ENCODE measurements at regions of chr1 and their contacts with region 1.

Region 1: GRCh38 chr1:53681977-53682685 is 56.8 kb downstream of the GLIS1 start:
- DNase-seq: peak; percentile 79
- H3K4me3 ChIP-seq: no peak overlapping the region
- H3K27ac ChIP-seq: peak overlapping the region in 1 of 2 experiments; percentile 88; a peak in 2 of 4 replicates
- H3K4me1 ChIP-seq: peaks cover 15 to 85% of the 10 kb centered on the region in 2 experiments; a peak in 2 of 4 replicates
- H3K27me3 ChIP-seq: no peaks in the 10 kb centered on the region
- CTCF ChIP-seq: peak; percentile 56
- EP300 ChIP-seq: no peak
- RAD21 ChIP-seq: peak; percentile 81

Region 2: GRCh38 chr1:53470155-53470554 is 212.0 kb before region 1 on chr1:
- CTCF ChIA-PET with region 1: interaction called, 10 read pairs
- POLR2A ChIA-PET with region 1: no interaction called
- DNase-seq: no peak
- H3K4me3 ChIP-seq: peak overlapping the region in 1 of 2 experiments; percentile 46; a peak in 1 of 4 replicates
- H3K27ac ChIP-seq: no peak overlapping the region
- H3K4me1 ChIP-seq: peaks cover 0 to 7% of the 10 kb centered on the region in 2 experiments; a peak in 1 of 4 replicates
- H3K27me3 ChIP-seq: no peaks in the 10 kb centered on the region; the same call in 1 of the 2 replicates
- CTCF ChIP-seq: no peak
- EP300 ChIP-seq: no peak
- RAD21 ChIP-seq: no peak

Region 3: GRCh38 chr1:53541761-53542550 is 140.2 kb before region 1 on chr1:
- CTCF ChIA-PET with region 1: no interaction called
- POLR2A ChIA-PET with region 1: no interaction called
- DNase-seq: no peak
- H3K4me3 ChIP-seq: no peak overlapping the region
- H3K27ac ChIP-seq: peak overlapping the region in 1 of 2 experiments; percentile 65; a peak in 2 of 4 replicates
- H3K4me1 ChIP-seq: peaks cover 7 to 42% of the 10 kb centered on the region in 2 experiments; a peak in 1 of 4 replicates
- H3K27me3 ChIP-seq: no peaks in the 10 kb centered on the region
- CTCF ChIP-seq: peak; percentile 47
- EP300 ChIP-seq: no peak
- RAD21 ChIP-seq: no peak

Region 4: DNA sequence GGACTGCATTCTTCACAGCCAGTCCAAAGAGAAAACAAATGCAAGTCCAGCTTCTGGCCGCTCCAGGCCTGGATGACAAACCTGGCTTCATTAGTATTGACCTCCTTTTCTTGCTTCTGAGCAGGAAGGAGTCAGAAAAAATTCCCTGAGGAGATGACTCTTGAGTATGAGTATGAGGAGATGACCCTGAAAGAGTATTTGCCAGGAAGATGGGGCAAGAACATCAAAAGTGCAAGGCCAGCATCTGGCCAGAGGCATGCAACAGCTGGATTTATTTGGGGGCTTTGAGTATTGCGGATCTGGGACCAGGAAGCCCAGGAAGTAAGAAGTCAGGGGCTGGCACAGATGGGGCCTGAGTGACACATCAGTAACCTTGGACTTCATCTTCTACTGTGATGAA is 57.1 kb before region 1 on chr1:
- CTCF ChIA-PET with region 1: interaction called, 13 read pairs
- POLR2A ChIA-PET with region 1: no interaction called
- DNase-seq: no peak
- H3K4me3 ChIP-seq: no peak overlapping the region
- H3K27ac ChIP-seq: no peak overlapping the region
- H3K4me1 ChIP-seq: peaks cover 0 to 27% of the 10 kb centered on the region in 2 experiments; a peak in 1 of 4 replicates
- H3K27me3 ChIP-seq: no peaks in the 10 kb centered on the region; the same call in 1 of the 2 replicates
- CTCF ChIP-seq: no peak
- EP300 ChIP-seq: no peak
- RAD21 ChIP-seq: no peak

Region 5: GRCh38 chr1:53639251-53639763 is 42.8 kb before region 1 on chr1:
- CTCF ChIA-PET with region 1: interaction called, 20 read pairs
- POLR2A ChIA-PET with region 1: interaction called, 3 read pairs
- DNase-seq: no peak
- H3K4me3 ChIP-seq: no peak overlapping the region
- H3K27ac ChIP-seq: no peak overlapping the region
- H3K4me1 ChIP-seq: peaks cover 0 to 42% of the 10 kb centered on the region in 2 experiments; a peak in 2 of 4 replicates
- H3K27me3 ChIP-seq: no peaks in the 10 kb centered on the region
- CTCF ChIP-seq: no peak
- EP300 ChIP-seq: no peak
- RAD21 ChIP-seq: no peak

Region 6: DNA sequence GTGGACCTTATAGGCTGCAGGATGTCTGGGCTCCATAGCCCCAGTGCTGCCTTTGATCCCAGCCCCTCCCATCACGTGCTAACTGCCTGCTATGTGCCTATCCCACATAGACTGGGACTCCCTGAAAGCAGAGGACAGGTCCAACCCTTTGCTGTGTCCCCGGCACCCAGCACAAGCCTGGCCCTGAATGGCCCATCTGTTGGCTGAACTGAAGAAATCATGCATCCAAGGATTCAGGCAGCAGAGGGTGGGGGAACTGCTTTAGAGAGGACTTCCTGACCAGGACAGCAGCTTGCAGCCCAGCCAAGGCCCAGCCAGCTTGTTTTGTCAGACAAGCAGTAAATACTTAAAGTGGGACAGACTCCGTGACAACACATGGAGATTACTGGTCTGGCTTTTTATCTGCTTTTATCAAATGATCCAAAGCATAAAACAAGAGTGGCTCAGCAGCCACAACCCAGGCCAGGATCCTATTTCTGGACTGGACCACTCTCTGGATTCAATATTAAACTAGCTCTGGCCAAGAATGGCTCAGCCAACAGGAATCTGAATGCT is 12.4 kb before region 1 on chr1:
- CTCF ChIA-PET with region 1: interaction called, 11 read pairs
- POLR2A ChIA-PET with region 1: interaction called, 5 read pairs
- DNase-seq: peak; percentile 77
- H3K4me3 ChIP-seq: no peak overlapping the region
- H3K27ac ChIP-seq: peak overlapping the region in 1 of 2 experiments; percentile 95; a peak in 3 of 4 replicates
- H3K4me1 ChIP-seq: peaks cover 0 to 32% of the 10 kb centered on the region in 2 experiments; a peak in 2 of 4 replicates
- H3K27me3 ChIP-seq: no peaks in the 10 kb centered on the region
- CTCF ChIP-seq: no peak
- EP300 ChIP-seq: peak in 1 of 2 experiments; percentile 78; a peak in 2 of 4 replicates
- RAD21 ChIP-seq: peak; percentile 36; the same call in 1 of the 2 replicates

Measured in SK-N-SH (cell line).